Calu3 (cell line): ENCODE measurements at regions of chr2 and their contacts with region 1.

Region 1: GRCh38 chr2:20661067-20661980 is 5.6 kb upstream of the GDF7 start:
- DNase-seq: peak; percentile 72
- H3K4me3 Mint-ChIP-seq: no peak overlapping the region
- H3K27ac Mint-ChIP-seq: no peak overlapping the region
- H3K4me1 Mint-ChIP-seq: peaks cover 20% of the 10 kb centered on the region
- H3K27me3 Mint-ChIP-seq: peaks cover 95% of the 10 kb centered on the region
- CTCF ChIP-seq: peak; percentile 92

Region 2: GRCh38 chr2:20642055-20642971 is 19.0 kb before region 1 on chr2:
- CTCF ChIA-PET with region 1: no interaction called
- intact Hi-C with region 1: no loop called
- DNase-seq: peak; percentile 89
- H3K4me3 Mint-ChIP-seq: no peak overlapping the region
- H3K27ac Mint-ChIP-seq: no peak overlapping the region
- H3K4me1 Mint-ChIP-seq: peaks cover 10% of the 10 kb centered on the region
- H3K27me3 Mint-ChIP-seq: no peaks in the 10 kb centered on the region
- CTCF ChIP-seq: peak; percentile 96

Region 3: GRCh38 chr2:20675701-20676352 is 14.5 kb after region 1 on chr2:
- CTCF ChIA-PET with region 1: interaction called, 24 read pairs
- intact Hi-C with region 1: no loop called
- DNase-seq: peak; percentile 54
- H3K4me3 Mint-ChIP-seq: no peak overlapping the region
- H3K27ac Mint-ChIP-seq: no peak overlapping the region
- H3K4me1 Mint-ChIP-seq: no peaks in the 10 kb centered on the region
- H3K27me3 Mint-ChIP-seq: no peaks in the 10 kb centered on the region
- CTCF ChIP-seq: no peak

Region 4: DNA sequence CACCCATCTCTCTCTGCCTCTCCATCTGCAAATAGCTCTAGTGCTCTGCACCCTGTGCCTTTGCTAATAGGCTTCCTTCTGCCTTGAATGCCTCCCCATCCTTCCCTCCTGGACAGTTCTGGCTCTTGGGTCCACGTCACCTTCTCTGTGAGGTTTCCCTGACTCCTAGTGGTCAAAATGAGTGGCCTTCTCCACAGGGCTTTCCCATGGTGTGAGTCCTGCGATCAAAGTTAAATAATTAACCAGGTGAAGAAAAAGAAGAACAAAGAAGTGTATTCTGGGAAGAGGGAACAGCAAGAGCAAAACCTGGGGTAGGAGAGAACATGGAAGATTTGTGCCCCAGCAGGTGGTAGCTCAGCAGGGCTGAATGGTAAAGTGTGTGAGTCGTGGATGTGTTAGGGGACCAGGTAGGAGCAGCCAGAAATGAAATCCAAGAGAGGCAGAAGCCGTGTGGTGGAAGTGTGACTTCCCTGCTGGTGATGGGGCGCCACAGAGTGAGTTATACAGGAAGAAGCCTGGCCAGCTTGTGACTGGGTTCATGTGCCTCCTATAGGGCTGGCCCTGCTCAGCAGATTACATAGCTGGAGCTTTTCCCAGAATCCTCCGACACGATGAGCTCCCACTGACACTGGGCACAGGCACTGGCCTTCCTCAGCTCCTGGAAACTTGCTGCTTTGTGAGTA is 255.4 kb after region 1 on chr2:
- CTCF ChIA-PET with region 1: no interaction called
- intact Hi-C with region 1: loop called (anchors 5 kb)
- DNase-seq: peak; percentile 23
- H3K4me3 Mint-ChIP-seq: no peak overlapping the region
- H3K27ac Mint-ChIP-seq: no peak overlapping the region
- H3K4me1 Mint-ChIP-seq: peaks cover 11% of the 10 kb centered on the region
- H3K27me3 Mint-ChIP-seq: peaks cover 88% of the 10 kb centered on the region
- CTCF ChIP-seq: peak; percentile 19

Region 5: DNA sequence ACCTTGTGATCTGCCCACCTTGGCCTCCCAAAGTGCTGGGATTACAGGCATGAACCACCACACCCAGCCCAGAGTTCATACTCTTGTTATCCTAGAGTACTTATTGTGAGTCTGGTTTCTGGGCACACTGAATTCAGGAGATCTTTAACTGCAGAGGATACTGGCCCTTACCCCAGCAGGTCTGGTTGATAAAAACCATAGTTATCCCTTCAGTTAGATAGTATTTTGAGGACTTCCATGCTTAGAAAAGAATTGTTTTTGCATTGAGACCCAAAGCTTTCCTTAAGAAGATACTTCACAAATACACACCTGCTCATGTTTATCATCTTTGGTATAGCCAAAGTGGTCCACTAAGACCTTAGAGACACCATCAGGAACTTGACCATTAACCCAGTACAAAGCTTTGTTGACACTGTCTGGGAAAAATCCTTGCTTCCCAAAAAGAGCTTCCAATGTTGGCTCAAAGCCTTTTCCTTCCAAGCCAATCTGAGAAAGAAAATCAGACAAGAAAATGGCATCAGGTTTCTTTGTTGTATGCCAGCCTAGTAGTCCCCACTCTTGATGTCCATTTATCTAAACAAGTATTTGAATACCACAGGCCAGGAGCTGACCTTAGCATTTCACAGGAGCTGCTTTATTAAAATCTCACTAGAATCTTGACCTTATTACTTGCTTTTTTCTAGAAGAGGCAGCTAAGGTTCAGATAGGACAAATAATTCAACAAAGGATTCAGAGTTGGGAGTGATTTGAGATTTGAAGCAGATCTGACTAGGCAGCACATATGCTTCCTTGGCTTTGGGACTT is 365.4 kb after region 1 on chr2:
- CTCF ChIA-PET with region 1: no interaction called
- intact Hi-C with region 1: loop called (anchors 1 kb)
- DNase-seq: no peak
- H3K4me3 Mint-ChIP-seq: no peak overlapping the region
- H3K27ac Mint-ChIP-seq: no peak overlapping the region
- H3K4me1 Mint-ChIP-seq: no peaks in the 10 kb centered on the region
- H3K27me3 Mint-ChIP-seq: peaks cover 25% of the 10 kb centered on the region
- CTCF ChIP-seq: no peak